ENCODE measurements at regions of chr20 and their contacts with region 1.

Region 1: GRCh38 chr20:52754366-52754765 is 217.8 kb upstream of the TSHZ2 start:
- DNase-seq: no peak
- ATAC-seq: no peak
- H3K4me3 ChIP-seq: no peak overlapping the region
- H3K27ac ChIP-seq: no peak overlapping the region
- H3K4me1 ChIP-seq: no peaks in the 10 kb centered on the region
- H3K27me3 ChIP-seq: no peaks in the 10 kb centered on the region
- CTCF ChIP-seq: no peak
- POLR2A ChIP-seq: no peak
- RAD21 ChIP-seq: no peak

Region 2: GRCh38 chr20:52624281-52624680 is 130.1 kb before region 1 on chr20:
- CTCF ChIA-PET with region 1: no interaction called
- POLR2A ChIA-PET with region 1: no interaction called
- dilution Hi-C with region 1: no loop called
- in situ Hi-C with region 1: no loop called
- intact Hi-C with region 1: no loop called
- DNase-seq: no peak
- ATAC-seq: no peak
- H3K4me3 ChIP-seq: no peak overlapping the region
- H3K27ac ChIP-seq: no peak overlapping the region
- H3K4me1 ChIP-seq: no peaks in the 10 kb centered on the region
- H3K27me3 ChIP-seq: no peaks in the 10 kb centered on the region
- CTCF ChIP-seq: no peak
- POLR2A ChIP-seq: no peak
- RAD21 ChIP-seq: no peak

Region 3: GRCh38 chr20:52799130-52799529 is 44.8 kb after region 1 on chr20:
- CTCF ChIA-PET with region 1: no interaction called
- POLR2A ChIA-PET with region 1: no interaction called
- dilution Hi-C with region 1: no loop called
- in situ Hi-C with region 1: no loop called
- intact Hi-C with region 1: loop called (anchors 1 kb)
- DNase-seq: no peak
- ATAC-seq: no peak
- H3K4me3 ChIP-seq: no peak overlapping the region
- H3K27ac ChIP-seq: no peak overlapping the region
- H3K4me1 ChIP-seq: no peaks in the 10 kb centered on the region
- H3K27me3 ChIP-seq: no peaks in the 10 kb centered on the region
- CTCF ChIP-seq: no peak
- POLR2A ChIP-seq: no peak
- RAD21 ChIP-seq: no peak